ENCODE measurements at regions of chr11 and their contacts with region 1.

Region 1: DNA sequence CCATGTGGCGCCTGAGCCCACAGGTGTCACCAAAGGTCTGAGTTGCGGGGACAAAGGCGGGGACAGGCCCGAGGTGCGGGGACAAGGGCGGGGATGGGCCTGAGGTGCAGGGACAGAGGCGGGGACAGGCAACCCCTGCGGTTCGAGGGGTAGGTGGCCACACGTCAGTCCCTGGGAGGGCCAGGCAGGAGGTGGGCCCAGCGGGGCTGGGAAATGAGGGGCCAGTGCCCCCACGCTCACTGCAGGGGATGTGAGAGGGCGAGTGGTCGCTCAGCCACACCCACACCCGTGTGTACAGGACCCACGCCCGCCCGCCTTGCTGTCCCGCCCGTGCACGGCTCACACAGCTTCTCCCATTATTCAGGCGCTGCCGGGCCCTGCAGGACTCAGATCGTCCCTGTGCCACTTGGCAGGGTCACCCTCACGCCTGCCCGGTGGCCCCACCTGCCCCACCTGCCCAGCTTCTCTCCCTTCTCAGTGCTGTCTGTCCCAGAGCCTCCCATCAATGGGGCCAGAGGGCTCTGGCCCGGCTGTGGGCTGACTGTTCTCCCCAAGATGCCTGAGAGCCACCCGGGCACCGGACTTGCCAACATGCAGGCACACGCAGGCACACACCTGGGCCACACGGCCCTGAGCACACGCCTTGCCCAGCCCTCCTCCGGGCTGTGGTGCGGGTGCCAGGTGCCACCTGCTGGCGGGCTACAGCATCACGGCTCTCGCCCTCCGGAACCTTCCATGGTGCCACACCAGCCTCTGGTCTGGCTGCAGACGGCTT is 14.2 kb upstream of the MUC6 start:
- H3K4me3 ChIP-seq: no peak overlapping the region
- H3K27ac ChIP-seq: no peak overlapping the region
- H3K4me1 ChIP-seq: no peaks in the 10 kb centered on the region
- CTCF ChIP-seq: peak; percentile 84

Region 2: GRCh38 chr11:848380-848931 is 202.3 kb before region 1 on chr11:
- CTCF ChIA-PET with region 1: interaction called, 10 read pairs
- POLR2A ChIA-PET with region 1: no interaction called
- H3K4me3 ChIP-seq: no peak overlapping the region
- H3K27ac ChIP-seq: no peak overlapping the region
- H3K4me1 ChIP-seq: 0 out of 2 replicates have a peak, but pooled peaks cover 6% of the 10 kb centered on the region
- CTCF ChIP-seq: peak; percentile 64

Region 3: DNA sequence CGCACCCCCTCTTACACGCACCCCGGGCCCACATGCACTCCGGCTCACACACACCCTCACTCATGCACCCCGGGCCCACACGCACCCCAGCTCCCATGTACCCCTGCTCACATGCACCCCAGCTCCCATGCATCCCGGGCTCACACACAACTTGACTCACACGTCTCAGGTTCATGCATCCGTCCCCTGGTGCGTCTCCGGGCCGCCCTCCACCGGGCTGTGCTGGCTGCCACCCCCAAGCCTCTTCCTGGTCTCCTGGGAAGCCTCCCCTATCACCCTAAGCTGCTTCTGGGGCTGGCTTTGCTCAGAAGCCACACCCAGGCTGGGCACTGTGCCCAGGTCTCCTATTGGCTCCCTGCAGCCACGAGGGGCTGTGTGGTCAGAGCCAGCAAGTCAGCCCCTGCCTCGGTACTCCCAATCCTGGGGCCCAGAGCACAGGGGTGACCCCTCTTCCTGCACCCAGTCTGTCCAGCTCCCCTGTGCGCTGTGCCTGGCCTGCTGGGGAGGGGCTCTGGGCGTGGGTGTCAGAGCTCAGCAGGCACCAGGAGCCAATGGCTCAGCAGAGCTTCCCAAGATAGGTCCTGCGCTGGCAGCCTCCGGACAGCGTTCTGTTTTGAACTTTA is 191.1 kb before region 1 on chr11:
- CTCF ChIA-PET with region 1: interaction called, 10 read pairs
- POLR2A ChIA-PET with region 1: no interaction called
- H3K4me3 ChIP-seq: no peak overlapping the region
- H3K27ac ChIP-seq: no peak overlapping the region; the same call in 1 of the 2 replicates
- H3K4me1 ChIP-seq: no peaks in the 10 kb centered on the region
- CTCF ChIP-seq: 0 out of 2 replicates have a peak, but pooled peaks have one; percentile 8

Measured in HEK293 (cell line).